K562 (cell line): ENCODE measurements at regions of chr7 and their contacts with region 1.

Region 1: DNA sequence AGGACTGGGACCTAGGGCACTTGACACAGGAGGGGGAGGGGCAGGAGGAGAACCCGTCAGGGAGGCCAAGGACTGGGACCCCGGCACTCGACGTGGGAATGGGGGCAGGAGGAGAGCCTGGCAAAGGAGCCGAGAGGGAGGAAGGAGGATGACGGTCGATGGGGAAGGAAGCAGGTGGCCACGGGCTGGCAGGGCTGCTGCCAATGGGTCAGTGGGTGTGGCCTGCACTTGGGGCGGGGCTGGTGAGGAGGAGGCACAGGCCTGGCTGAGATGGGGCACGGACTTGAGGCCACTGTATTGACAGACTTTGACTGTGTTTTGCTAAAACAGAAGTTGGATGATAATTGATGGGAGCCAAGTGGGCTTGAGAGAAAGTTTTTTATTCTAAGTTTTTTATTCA is 68.9 kb downstream of the RBM33 start:
- DNase-seq: no peak
- ATAC-seq: no peak
- H3K4me3 ChIP-seq: no peak overlapping the region
- H3K27ac ChIP-seq: no peak overlapping the region
- H3K4me1 ChIP-seq: peaks cover 7 to 8% of the 10 kb centered on the region in 2 experiments; a peak in 4 of 5 replicates
- H3K27me3 ChIP-seq: no peaks in the 10 kb centered on the region
- CTCF ChIP-seq: no peak
- EP300 ChIP-seq: no peak
- POLR2A ChIP-seq: no peak
- RAD21 ChIP-seq: no peak

Region 2: DNA sequence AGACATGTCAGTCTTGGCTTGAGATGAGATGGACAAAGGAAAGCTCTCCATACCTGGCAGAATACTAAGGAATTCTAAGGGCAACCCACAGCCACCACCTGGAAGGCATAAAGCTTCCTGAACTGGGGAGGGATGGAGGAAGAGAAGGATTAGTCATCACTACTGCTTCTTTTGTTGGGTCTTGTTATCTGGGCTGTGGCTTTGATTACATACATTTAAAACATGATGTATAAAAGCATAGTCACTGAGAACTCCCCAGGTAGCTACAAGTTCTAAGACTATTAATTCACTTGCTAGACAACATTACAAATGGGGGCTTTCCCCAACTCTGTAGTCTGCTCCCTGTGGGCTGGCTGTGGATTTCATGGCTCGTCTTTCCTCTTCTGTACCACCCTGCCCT is 10.8 kb before region 1 on chr7:
- CTCF ChIA-PET with region 1: no interaction called
- POLR2A ChIA-PET with region 1: interaction called, 16 read pairs
- in situ Hi-C with region 1: no loop called
- intact Hi-C with region 1: no loop called
- DNase-seq: no peak
- ATAC-seq: no peak
- H3K4me3 ChIP-seq: no peak overlapping the region
- H3K27ac ChIP-seq: no peak overlapping the region
- H3K4me1 ChIP-seq: no peaks in the 10 kb centered on the region; a peak in 1 of 5 replicates
- H3K27me3 ChIP-seq: no peaks in the 10 kb centered on the region
- CTCF ChIP-seq: no peak
- EP300 ChIP-seq: no peak
- POLR2A ChIP-seq: no peak
- RAD21 ChIP-seq: no peak

Region 3: DNA sequence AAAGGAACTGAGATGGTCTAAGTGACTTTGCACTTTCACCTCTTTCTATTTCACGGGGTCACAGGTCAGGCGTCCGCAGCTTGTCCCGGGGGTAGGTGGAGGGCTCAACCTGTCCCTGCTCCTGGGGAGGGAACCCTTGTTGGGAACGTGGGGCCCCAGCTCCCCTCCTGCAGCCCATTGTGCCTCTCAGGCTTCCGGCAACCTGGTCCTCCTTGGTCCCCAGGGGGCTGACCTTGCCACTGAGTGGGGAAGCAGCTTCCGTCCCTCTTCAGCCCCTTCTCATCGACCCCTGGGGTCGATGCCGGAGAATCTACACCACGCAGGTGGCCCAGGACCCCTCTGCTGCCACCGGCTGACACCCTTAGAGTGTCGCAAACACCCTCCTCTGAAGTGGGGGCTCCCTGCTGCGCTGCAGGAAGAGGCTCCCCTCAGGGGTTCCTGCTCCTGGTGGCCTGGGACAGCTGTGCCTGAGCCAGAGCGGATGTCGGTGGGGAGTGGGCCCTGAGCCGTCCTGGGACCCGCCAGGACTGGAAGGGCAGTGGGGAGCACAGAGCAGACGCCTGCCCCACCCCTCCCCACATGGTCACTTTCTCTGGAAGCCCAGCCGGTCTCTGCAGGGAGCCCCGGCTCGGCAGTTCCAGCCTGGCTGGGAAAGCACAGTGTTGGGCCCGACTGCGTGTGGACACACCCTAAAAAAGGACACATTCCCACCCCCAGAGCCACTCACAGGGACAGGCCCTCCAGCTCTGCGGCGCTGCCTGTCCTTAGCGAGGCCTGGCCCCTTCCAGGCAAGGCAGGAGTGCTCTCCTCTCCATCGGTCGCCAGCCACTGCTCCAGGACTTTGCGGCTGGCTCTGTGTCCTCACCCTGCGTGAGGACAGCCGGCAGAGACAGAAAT is 456.3 kb after region 1 on chr7:
- CTCF ChIA-PET with region 1: no interaction called
- POLR2A ChIA-PET with region 1: no interaction called
- in situ Hi-C with region 1: no loop called
- intact Hi-C with region 1: no loop called
- DNase-seq: no peak
- ATAC-seq: peak; percentile 20
- H3K4me3 ChIP-seq: no peak overlapping the region
- H3K27ac ChIP-seq: no peak overlapping the region
- H3K4me1 ChIP-seq: peaks cover 0 to 10% of the 10 kb centered on the region in 2 experiments; a peak in 1 of 5 replicates
- H3K27me3 ChIP-seq: peaks cover 23 to 63% of the 10 kb centered on the region in 2 experiments; a peak in 4 of 5 replicates
- CTCF ChIP-seq: no peak
- EP300 ChIP-seq: no peak
- POLR2A ChIP-seq: no peak
- RAD21 ChIP-seq: no peak